ENCODE measurements at regions of chr5 and their contacts with region 1.

Region 1: GRCh38 chr5:157148734-157149615 is 6.3 kb upstream of the MED7 start:
- DNase-seq: peak; percentile 68 to 91 (median 85)
- ATAC-seq: peak; percentile 86
- H3K4me3 ChIP-seq: no peak overlapping the region
- H3K4me3 Mint-ChIP-seq: no peak overlapping the region
- H3K27ac ChIP-seq: no peak overlapping the region
- H3K27ac Mint-ChIP-seq: peak overlapping the region; percentile 76
- H3K4me1 ChIP-seq: peaks cover 33% of the 10 kb centered on the region
- H3K4me1 Mint-ChIP-seq: peaks cover 37% of the 10 kb centered on the region
- H3K27me3 ChIP-seq: no peaks in the 10 kb centered on the region
- H3K27me3 Mint-ChIP-seq: no peaks in the 10 kb centered on the region
- CTCF ChIP-seq: peak; percentile 82

Region 2: GRCh38 chr5:157172403-157172802 is 23.4 kb after region 1 on chr5:
- CTCF ChIA-PET with region 1: interaction called, 13 read pairs
- POLR2A ChIA-PET with region 1: interaction called, 4 read pairs
- intact Hi-C with region 1: no loop called
- DNase-seq: peak in 8 of 9 experiments; percentile 40 to 93 (median 66)
- ATAC-seq: peak; percentile 96
- H3K4me3 ChIP-seq: peak overlapping the region in 1 of 2 experiments; percentile 4
- H3K4me3 Mint-ChIP-seq: peak overlapping the region; percentile 46
- H3K27ac ChIP-seq: peak overlapping the region; percentile 4 to 59
- H3K27ac Mint-ChIP-seq: peak overlapping the region; percentile 92
- H3K4me1 ChIP-seq: peaks cover 40% of the 10 kb centered on the region
- H3K4me1 Mint-ChIP-seq: peaks cover 65% of the 10 kb centered on the region
- H3K27me3 ChIP-seq: no peaks in the 10 kb centered on the region
- H3K27me3 Mint-ChIP-seq: no peaks in the 10 kb centered on the region
- CTCF ChIP-seq: no peak

Region 3: DNA sequence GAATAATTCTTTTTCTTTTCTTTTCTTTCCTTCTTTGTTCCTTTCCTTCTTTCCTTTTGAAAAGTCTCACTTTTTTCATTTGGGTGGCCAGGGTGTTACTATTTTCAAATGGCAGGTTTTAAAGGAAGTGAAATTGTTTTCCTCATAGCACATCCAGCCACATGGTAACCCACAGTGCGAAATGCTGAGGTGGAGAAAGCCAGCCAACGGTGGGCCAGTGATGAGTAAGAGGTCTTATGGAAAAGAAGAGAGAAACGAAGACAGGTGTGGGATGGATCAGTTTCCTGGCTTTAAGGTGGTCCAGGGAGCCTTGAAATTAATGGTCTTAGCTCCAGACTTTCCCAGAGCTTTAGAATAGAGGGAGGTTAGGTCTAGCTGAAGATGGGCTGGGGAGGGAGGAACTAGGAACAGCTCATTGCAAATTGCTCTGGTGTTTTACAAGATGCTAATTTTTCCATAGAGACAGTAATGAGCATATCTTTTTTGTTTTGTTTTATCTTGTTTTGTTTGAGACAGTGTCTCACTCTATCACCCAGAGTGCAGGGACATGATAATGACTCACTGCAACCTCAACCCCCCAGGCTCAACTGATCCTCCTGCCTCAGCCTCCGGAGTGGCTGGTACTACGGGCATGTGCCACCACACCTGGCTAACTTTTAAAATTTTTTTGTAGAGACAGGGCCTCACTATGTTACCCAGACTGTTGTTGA is 49.5 kb after region 1 on chr5:
- CTCF ChIA-PET with region 1: interaction called, 21 read pairs
- POLR2A ChIA-PET with region 1: interaction called, 12 read pairs
- intact Hi-C with region 1: no loop called
- DNase-seq: peak in 6 of 9 experiments; percentile 42 to 84 (median 66)
- ATAC-seq: peak; percentile 60
- H3K4me3 ChIP-seq: no peak overlapping the region
- H3K4me3 Mint-ChIP-seq: peak overlapping the region; percentile 63
- H3K27ac ChIP-seq: peak overlapping the region; percentile 32 to 83
- H3K27ac Mint-ChIP-seq: peak overlapping the region; percentile 94
- H3K4me1 ChIP-seq: peaks cover 97% of the 10 kb centered on the region
- H3K4me1 Mint-ChIP-seq: peaks cover 93% of the 10 kb centered on the region
- H3K27me3 ChIP-seq: no peaks in the 10 kb centered on the region
- H3K27me3 Mint-ChIP-seq: no peaks in the 10 kb centered on the region
- CTCF ChIP-seq: no peak

Region 4: GRCh38 chr5:157225469-157226422 is 76.8 kb after region 1 on chr5:
- CTCF ChIA-PET with region 1: interaction called, 11 read pairs
- POLR2A ChIA-PET with region 1: interaction called, 3 read pairs
- intact Hi-C with region 1: loop called (anchors 1 to 5 kb)
- DNase-seq: peak in 2 of 9 experiments; percentile 55 to 70
- ATAC-seq: no peak
- H3K4me3 ChIP-seq: no peak overlapping the region
- H3K4me3 Mint-ChIP-seq: no peak overlapping the region
- H3K27ac ChIP-seq: peak overlapping the region in 1 of 2 experiments; percentile 47
- H3K27ac Mint-ChIP-seq: peak overlapping the region; percentile 88
- H3K4me1 ChIP-seq: peaks cover 52% of the 10 kb centered on the region
- H3K4me1 Mint-ChIP-seq: peaks cover 58% of the 10 kb centered on the region
- H3K27me3 ChIP-seq: no peaks in the 10 kb centered on the region
- H3K27me3 Mint-ChIP-seq: no peaks in the 10 kb centered on the region
- CTCF ChIP-seq: no peak

Region 5: GRCh38 chr5:157259699-157260098 is 110.7 kb after region 1 on chr5:
- CTCF ChIA-PET with region 1: interaction called, 28 read pairs
- POLR2A ChIA-PET with region 1: no interaction called
- intact Hi-C with region 1: no loop called
- DNase-seq: no peak
- ATAC-seq: no peak
- H3K4me3 ChIP-seq: no peak overlapping the region
- H3K4me3 Mint-ChIP-seq: no peak overlapping the region
- H3K27ac ChIP-seq: no peak overlapping the region
- H3K27ac Mint-ChIP-seq: peak overlapping the region; percentile 38
- H3K4me1 ChIP-seq: peaks cover 78% of the 10 kb centered on the region
- H3K4me1 Mint-ChIP-seq: peaks cover 82% of the 10 kb centered on the region
- H3K27me3 ChIP-seq: no peaks in the 10 kb centered on the region
- H3K27me3 Mint-ChIP-seq: no peaks in the 10 kb centered on the region
- CTCF ChIP-seq: no peak

Measured in CD8-positive, alpha-beta T cell (primary cell).